HCT116 (cell line): ENCODE measurements at regions of chr5 and their contacts with region 1.

Region 1: DNA sequence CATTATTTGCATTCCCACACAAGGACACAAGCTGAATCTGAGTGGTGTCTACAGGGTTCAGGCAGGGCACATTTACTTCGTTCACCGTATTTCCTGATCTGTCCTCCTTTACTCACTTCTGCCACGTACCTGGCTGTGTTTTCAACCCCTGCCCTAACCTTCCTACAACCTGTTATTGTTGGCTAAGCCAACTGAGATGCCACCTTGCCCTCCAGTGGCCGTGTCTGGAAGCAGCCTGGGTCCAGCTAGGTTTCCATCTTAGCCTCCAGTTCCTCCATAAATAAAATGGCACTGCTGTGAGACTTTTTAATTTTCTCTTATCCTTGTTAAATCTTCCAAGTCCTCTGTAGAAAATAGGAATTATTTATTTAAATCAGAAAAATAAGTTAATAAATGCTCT is 64.8 kb downstream of the ATP10B start:
- DNase-seq: no peak
- ATAC-seq: peak; percentile 30; the same call in 1 of the 2 replicates
- H3K4me3 ChIP-seq: no peak overlapping the region
- H3K27ac ChIP-seq: no peak overlapping the region
- H3K4me1 ChIP-seq: no peaks in the 10 kb centered on the region
- H3K27me3 ChIP-seq: no peaks in the 10 kb centered on the region
- CTCF ChIP-seq: peak in 2 of 3 experiments; percentile 32 to 35; a peak in 3 of 6 replicates
- POLR2A ChIP-seq: no peak
- RAD21 ChIP-seq: peak; percentile 38

Region 2: GRCh38 chr5:159951387-159951786 is 835.9 kb before region 1 on chr5:
- CTCF ChIA-PET with region 1: no interaction called
- POLR2A ChIA-PET with region 1: no interaction called
- RAD21 ChIA-PET with region 1: no interaction called
- intact Hi-C with region 1: no loop called
- DNase-seq: peak; percentile 22
- ATAC-seq: peak; percentile 97
- H3K4me3 ChIP-seq: no peak overlapping the region
- H3K27ac ChIP-seq: no peak overlapping the region
- H3K4me1 ChIP-seq: peaks cover 0 to 14% of the 10 kb centered on the region in 2 experiments; a peak in 2 of 4 replicates
- H3K27me3 ChIP-seq: no peaks in the 10 kb centered on the region
- CTCF ChIP-seq: peak in 2 of 3 experiments; percentile 65 to 68; a peak in 5 of 6 replicates
- POLR2A ChIP-seq: no peak
- RAD21 ChIP-seq: peak; percentile 48

Region 3: DNA sequence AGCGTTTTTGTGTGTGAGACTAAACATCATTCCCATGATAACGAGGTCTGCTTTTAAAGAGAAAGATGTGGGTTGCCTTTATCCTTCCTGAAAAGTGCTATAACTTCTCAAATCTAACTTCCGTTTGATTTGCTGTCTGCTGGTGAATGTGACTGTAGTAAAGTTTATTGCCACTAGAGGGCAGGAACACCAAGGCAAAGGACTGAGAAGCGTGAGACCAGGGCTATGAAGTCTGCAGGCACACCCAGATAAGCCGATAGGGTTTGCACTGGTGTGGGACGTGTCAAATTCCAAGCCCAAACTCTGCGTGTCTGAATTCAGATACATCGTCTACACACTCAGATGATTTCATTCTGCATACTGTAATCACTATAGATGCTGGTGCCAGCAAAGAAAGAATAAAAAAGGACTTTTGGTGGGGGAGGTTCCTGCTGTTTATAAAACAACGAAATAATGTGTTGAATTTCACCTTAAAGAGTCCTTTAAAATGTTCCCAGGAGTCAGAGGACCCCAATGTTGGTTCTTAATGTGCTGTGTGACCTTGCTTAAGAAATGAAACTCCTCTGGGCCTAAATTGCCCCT is 278.4 kb before region 1 on chr5:
- CTCF ChIA-PET with region 1: no interaction called
- POLR2A ChIA-PET with region 1: no interaction called
- RAD21 ChIA-PET with region 1: no interaction called
- intact Hi-C with region 1: loop called (anchors 2 kb)
- DNase-seq: peak; percentile 73
- ATAC-seq: peak; percentile 95
- H3K4me3 ChIP-seq: no peak overlapping the region
- H3K27ac ChIP-seq: no peak overlapping the region
- H3K4me1 ChIP-seq: no peaks in the 10 kb centered on the region
- H3K27me3 ChIP-seq: peaks cover 23% of the 10 kb centered on the region
- CTCF ChIP-seq: peak; percentile 50 to 93 (median 73); a peak in 5 of 6 replicates
- POLR2A ChIP-seq: no peak
- RAD21 ChIP-seq: peak; percentile 91